ENCODE measurements at regions of chr1 and their contacts with region 1.

Region 1: GRCh38 chr1:18681423-18681835 is 50.8 kb downstream of the PAX7 start:
- DNase-seq: peak; percentile 20
- ATAC-seq: peak; percentile 42
- H3K4me3 Mint-ChIP-seq: no peak overlapping the region
- H3K27ac Mint-ChIP-seq: no peak overlapping the region
- H3K4me1 Mint-ChIP-seq: no peaks in the 10 kb centered on the region
- H3K27me3 Mint-ChIP-seq: peaks cover 9% of the 10 kb centered on the region

Region 2: GRCh38 chr1:18618546-18619466 is 62.6 kb before region 1 on chr1:
- CTCF ChIA-PET with region 1: interaction called, 4 read pairs
- POLR2A ChIA-PET with region 1: no interaction called
- intact Hi-C with region 1: loop called in 1 of 2 experiments (anchors 5 kb)
- DNase-seq: peak; percentile 54
- ATAC-seq: peak; percentile 98
- H3K4me3 Mint-ChIP-seq: no peak overlapping the region
- H3K27ac Mint-ChIP-seq: no peak overlapping the region
- H3K4me1 Mint-ChIP-seq: peaks cover 9% of the 10 kb centered on the region
- H3K27me3 Mint-ChIP-seq: peaks cover 34% of the 10 kb centered on the region

Region 3: GRCh38 chr1:18820791-18821641 is 139.6 kb after region 1 on chr1:
- CTCF ChIA-PET with region 1: no interaction called
- POLR2A ChIA-PET with region 1: no interaction called
- intact Hi-C with region 1: loop called in 1 of 2 experiments (anchors 5 kb)
- DNase-seq: peak; percentile 78
- ATAC-seq: peak; percentile 63
- H3K4me3 Mint-ChIP-seq: no peak overlapping the region
- H3K27ac Mint-ChIP-seq: no peak overlapping the region
- H3K4me1 Mint-ChIP-seq: no peaks in the 10 kb centered on the region
- H3K27me3 Mint-ChIP-seq: peaks cover 46% of the 10 kb centered on the region

Measured in activated CD4-positive, alpha-beta T cell treated with anti-CD3 and anti-CD28 coated beads for 36 hours (primary cell).